HEK293 (cell line): ENCODE measurements at regions of chr1 and their contacts with region 1.

Region 1: GRCh38 chr1:203006948-203007871 is at the start of gene TMEM183A:
- H3K4me3 ChIP-seq: peak within 1 kb of the TSS; percentile 87
- H3K27ac ChIP-seq: peak within 1 kb of the TSS; percentile 78
- H3K4me1 ChIP-seq: peaks cover 6% of the 10 kb centered on the region; the same call in 1 of the 2 replicates
- CTCF ChIP-seq: 0 out of 2 replicates have a peak, but pooled peaks have one; percentile 46

Region 2: GRCh38 chr1:202926720-202927491 is 80.3 kb before region 1 on chr1 and contains the start of gene KLHL12:
- CTCF ChIA-PET with region 1: interaction called, 4 read pairs
- POLR2A ChIA-PET with region 1: interaction called, 10 read pairs
- H3K4me3 ChIP-seq: peak within 1 kb of the TSS; percentile 72
- H3K27ac ChIP-seq: peak within 1 kb of the TSS; percentile 56
- H3K4me1 ChIP-seq: no peaks in the 10 kb centered on the region
- CTCF ChIP-seq: peak; percentile 86

Region 3: DNA sequence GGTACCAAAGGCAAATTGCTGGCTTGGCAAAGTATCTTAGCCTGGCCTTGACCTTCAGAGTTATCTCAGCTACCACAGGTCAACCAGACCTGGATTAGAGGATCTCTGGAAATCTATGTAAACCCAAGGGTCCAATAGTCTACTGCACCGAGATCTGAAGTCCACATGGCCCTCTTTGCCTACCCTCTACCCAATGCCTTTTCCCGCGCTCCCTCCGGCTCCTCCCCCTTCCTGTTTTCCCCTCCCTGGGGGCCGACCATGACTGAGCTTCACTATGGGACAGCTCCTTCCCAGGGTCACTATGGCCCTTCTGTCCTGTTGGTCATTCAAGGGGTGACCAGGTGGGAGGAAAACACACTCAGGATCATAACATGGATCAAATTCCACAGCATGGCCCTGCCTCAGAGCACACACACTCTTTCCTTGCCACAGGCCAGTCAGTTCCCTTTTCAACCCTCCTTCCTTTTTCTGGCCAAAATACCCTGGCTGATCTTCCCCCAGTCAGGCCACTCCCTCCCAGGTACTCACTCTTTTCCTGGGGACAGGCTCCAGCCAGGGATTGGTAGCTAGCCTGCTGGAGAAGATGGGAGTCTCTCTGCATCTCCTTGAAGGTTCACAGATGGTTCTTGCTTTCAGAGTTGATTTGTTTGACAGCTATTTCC is 19.2 kb before region 1 on chr1:
- CTCF ChIA-PET with region 1: no interaction called
- POLR2A ChIA-PET with region 1: no interaction called
- H3K4me3 ChIP-seq: no peak overlapping the region
- H3K27ac ChIP-seq: no peak overlapping the region
- H3K4me1 ChIP-seq: no peaks in the 10 kb centered on the region
- CTCF ChIP-seq: no peak

Region 4: GRCh38 chr1:203026031-203026989 is 19.1 kb after region 1 on chr1 and contains the start of gene PPFIA4:
- CTCF ChIA-PET with region 1: interaction called, 4 read pairs
- POLR2A ChIA-PET with region 1: interaction called, 11 read pairs
- H3K4me3 ChIP-seq: peak within 1 kb of the TSS; percentile 56
- H3K27ac ChIP-seq: no peak within 1 kb of the TSS; the same call in 1 of the 2 replicates
- H3K4me1 ChIP-seq: no peaks in the 10 kb centered on the region
- CTCF ChIP-seq: peak; percentile 41; the same call in 1 of the 2 replicates